ENCODE measurements at regions of chr5 and their contacts with region 1.

Region 1: DNA sequence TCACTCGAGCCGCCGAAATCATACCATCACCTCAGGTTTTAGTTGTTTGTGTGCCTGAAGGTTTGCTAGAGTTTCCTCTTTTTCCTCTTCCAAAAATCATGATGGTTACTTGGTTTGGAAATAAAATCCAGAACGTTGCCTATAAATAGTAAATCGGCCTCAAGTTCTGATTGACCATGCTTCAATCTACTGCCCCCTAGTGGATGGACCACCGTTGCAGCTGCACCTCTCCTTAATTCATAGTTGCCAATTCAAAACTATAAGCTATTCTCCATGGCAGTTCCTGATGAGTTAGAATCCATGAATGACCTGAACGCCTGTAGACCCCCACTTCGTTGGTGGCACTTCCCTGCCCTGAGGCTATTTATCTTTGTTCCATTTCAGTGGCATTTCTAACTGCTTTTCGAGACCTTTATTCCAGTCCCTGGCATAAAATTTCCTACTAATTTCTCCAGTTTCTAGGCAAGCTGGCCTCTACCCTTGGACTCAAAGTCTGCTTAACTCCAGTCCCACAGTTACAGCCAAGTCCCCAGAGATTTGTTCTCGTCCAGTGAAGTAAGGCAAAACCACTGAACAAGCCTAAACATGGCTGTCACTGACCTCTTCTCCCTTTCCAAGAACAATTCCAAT is 422.6 kb downstream of the EFNA5 start:
- DNase-seq: peak; percentile 13
- ATAC-seq: peak; percentile 80
- H3K4me3 ChIP-seq: no peak overlapping the region
- H3K27ac ChIP-seq: no peak overlapping the region
- H3K4me1 ChIP-seq: no peaks in the 10 kb centered on the region
- H3K27me3 ChIP-seq: peaks cover 0 to 4% of the 10 kb centered on the region in 2 experiments; a peak in 1 of 4 replicates
- CTCF ChIP-seq: peak; percentile 67 to 92 (median 79)
- EP300 ChIP-seq: no peak
- POLR2A ChIP-seq: no peak
- RAD21 ChIP-seq: peak; percentile 62

Region 2: GRCh38 chr5:107088907-107089306 is 159.3 kb before region 1 on chr5:
- CTCF ChIA-PET with region 1: no interaction called
- POLR2A ChIA-PET with region 1: no interaction called
- RAD21 ChIA-PET with region 1: no interaction called
- SMC1A ChIA-PET with region 1: no interaction called
- in situ Hi-C with region 1: no loop called
- intact Hi-C with region 1: no loop called
- DNase-seq: no peak
- ATAC-seq: no peak
- H3K4me3 ChIP-seq: no peak overlapping the region
- H3K27ac ChIP-seq: no peak overlapping the region
- H3K4me1 ChIP-seq: no peaks in the 10 kb centered on the region
- H3K27me3 ChIP-seq: no peaks in the 10 kb centered on the region
- CTCF ChIP-seq: no peak
- EP300 ChIP-seq: no peak
- POLR2A ChIP-seq: no peak
- RAD21 ChIP-seq: no peak

Region 3: GRCh38 chr5:107218457-107219193 is 29.6 kb before region 1 on chr5:
- CTCF ChIA-PET with region 1: interaction called, 20 read pairs
- POLR2A ChIA-PET with region 1: no interaction called
- RAD21 ChIA-PET with region 1: no interaction called
- SMC1A ChIA-PET with region 1: interaction called, 4 read pairs
- in situ Hi-C with region 1: no loop called
- intact Hi-C with region 1: no loop called
- DNase-seq: no peak
- ATAC-seq: no peak; the same call in 2 of the 3 replicates
- H3K4me3 ChIP-seq: no peak overlapping the region
- H3K27ac ChIP-seq: no peak overlapping the region
- H3K4me1 ChIP-seq: no peaks in the 10 kb centered on the region
- H3K27me3 ChIP-seq: no peaks in the 10 kb centered on the region; a peak in 1 of 4 replicates
- CTCF ChIP-seq: no peak
- EP300 ChIP-seq: no peak
- POLR2A ChIP-seq: no peak
- RAD21 ChIP-seq: no peak

Region 4: GRCh38 chr5:107263387-107264018 is 15.3 kb after region 1 on chr5:
- CTCF ChIA-PET with region 1: interaction called, 35 read pairs
- POLR2A ChIA-PET with region 1: interaction called, 4 read pairs
- RAD21 ChIA-PET with region 1: interaction called, 5 read pairs
- SMC1A ChIA-PET with region 1: interaction called, 44 read pairs
- in situ Hi-C with region 1: no loop called
- intact Hi-C with region 1: no loop called
- DNase-seq: peak; percentile 73
- ATAC-seq: peak; percentile 87
- H3K4me3 ChIP-seq: no peak overlapping the region; the same call in 1 of the 2 replicates
- H3K27ac ChIP-seq: no peak overlapping the region
- H3K4me1 ChIP-seq: peaks cover 15% of the 10 kb centered on the region; the same call in 1 of the 2 replicates
- H3K27me3 ChIP-seq: no peaks in the 10 kb centered on the region
- CTCF ChIP-seq: no peak
- EP300 ChIP-seq: peak in 1 of 2 experiments; percentile 65; a peak in 1 of 4 replicates
- POLR2A ChIP-seq: no peak
- RAD21 ChIP-seq: no peak

Region 5: DNA sequence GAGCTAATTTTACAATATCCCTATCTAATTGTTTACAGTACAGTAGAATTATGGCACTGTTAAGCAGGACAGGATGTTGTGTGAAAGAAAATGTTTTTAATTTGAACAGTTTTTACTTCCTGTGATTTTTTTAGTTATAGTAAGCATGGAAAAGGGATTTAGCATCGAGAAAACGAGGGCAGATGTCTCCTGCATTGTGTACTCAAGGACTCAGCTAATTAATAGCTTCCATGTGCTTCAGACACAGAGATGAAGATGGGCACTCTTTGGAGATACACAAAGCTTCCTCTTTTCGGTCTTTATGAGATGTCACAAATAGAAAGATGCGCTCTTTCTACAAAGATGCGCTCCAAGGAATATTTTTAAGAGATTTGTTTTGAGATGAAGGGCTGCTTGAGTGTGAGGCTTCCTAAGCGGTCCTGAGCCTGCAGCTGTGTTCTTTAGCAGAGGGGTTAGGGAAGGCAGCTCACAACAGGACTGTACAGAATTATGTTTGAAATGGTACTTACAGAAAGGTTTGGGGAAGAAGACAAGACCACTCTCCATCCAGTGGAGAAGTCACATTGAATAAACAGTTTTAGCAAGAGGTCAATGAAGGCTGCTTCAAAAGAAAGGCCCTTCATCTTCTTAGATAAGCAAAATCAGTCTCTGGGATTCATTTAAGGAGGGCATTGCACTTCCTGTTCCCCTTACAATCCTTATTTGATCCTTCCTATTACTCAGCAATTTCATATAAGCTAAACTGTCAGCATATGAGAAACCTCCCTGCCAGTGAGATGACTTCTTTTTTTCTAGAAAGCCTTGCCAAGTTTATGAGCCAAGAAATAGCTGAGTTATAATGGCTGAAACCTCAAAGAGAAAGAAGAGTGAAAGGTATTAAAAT is 111.1 kb after region 1 on chr5:
- CTCF ChIA-PET with region 1: interaction called, 25 read pairs
- POLR2A ChIA-PET with region 1: no interaction called
- RAD21 ChIA-PET with region 1: interaction called, 4 read pairs
- SMC1A ChIA-PET with region 1: interaction called, 26 read pairs
- in situ Hi-C with region 1: no loop called
- intact Hi-C with region 1: no loop called
- DNase-seq: no peak
- ATAC-seq: no peak; the same call in 2 of the 3 replicates
- H3K4me3 ChIP-seq: no peak overlapping the region
- H3K27ac ChIP-seq: no peak overlapping the region
- H3K4me1 ChIP-seq: peaks cover 6% of the 10 kb centered on the region; the same call in 1 of the 2 replicates
- H3K27me3 ChIP-seq: no peaks in the 10 kb centered on the region; a peak in 1 of 4 replicates
- CTCF ChIP-seq: no peak
- EP300 ChIP-seq: no peak
- POLR2A ChIP-seq: no peak
- RAD21 ChIP-seq: no peak